CD4-positive, alpha-beta memory T cell (primary cell): ENCODE measurements at regions of chr9 and their contacts with region 1.

Region 1: DNA sequence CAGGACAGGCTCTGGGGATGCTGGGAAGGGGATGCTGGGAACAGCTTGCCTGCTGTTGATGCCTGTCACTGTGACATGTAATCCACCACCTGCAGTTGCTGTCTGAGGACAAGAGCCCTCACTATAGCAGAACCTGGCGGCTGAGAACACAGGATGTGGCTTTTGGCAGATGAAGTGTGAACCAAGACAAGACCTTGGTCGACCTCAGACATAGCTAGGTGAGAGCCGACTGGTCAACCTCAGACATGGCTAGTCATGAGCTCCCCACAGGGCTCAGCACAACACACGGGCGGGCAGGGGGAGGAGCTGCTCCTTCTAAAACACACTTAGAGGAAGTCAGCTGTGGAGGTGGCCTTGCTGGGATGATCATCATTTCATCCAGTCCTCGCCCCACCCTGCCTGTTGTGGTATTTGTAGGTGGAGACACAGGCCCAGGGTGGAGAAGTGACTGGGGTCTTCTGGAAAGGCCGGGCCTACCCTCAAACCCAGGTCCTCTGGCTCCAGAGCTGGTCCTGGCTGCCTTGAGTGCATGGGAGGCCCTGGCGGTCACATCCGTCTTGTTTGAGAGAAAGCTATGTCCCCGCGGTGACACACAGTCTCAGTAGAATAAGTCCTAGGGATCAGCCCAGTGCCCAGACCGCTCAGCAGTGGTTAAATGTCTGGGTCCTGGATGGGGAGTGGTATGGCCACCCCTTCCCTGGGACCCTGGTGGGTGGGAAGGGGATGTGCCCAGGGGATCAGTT is 6.1 kb downstream of the SUSD3 start:
- DNase-seq: peak; percentile 90 to 96 (median 92)
- H3K4me3 ChIP-seq: peak overlapping the region in 1 of 2 donors; percentile 47
- H3K4me3 Mint-ChIP-seq: peak overlapping the region; percentile 87 to 95 (median 91)
- H3K27ac ChIP-seq: peak overlapping the region; percentile 72
- H3K27ac Mint-ChIP-seq: peak overlapping the region; percentile 96 to 100 (median 99)
- H3K4me1 ChIP-seq: peaks cover 98% of the 10 kb centered on the region
- H3K4me1 Mint-ChIP-seq: peaks cover 68 to 97% (median 82%) of the 10 kb centered on the region in 4 donors
- H3K27me3 ChIP-seq: no peaks in the 10 kb centered on the region
- H3K27me3 Mint-ChIP-seq: no peaks in the 10 kb centered on the region

Region 2: GRCh38 chr9:92369075-92369474 is 695.5 kb before region 1 on chr9:
- CTCF ChIA-PET with region 1: no interaction called
- POLR2A ChIA-PET with region 1: no interaction called
- intact Hi-C with region 1: no loop called
- DNase-seq: no peak
- H3K4me3 ChIP-seq: no peak overlapping the region
- H3K4me3 Mint-ChIP-seq: no peak overlapping the region
- H3K27ac ChIP-seq: no peak overlapping the region
- H3K27ac Mint-ChIP-seq: no peak overlapping the region
- H3K4me1 ChIP-seq: no peaks in the 10 kb centered on the region
- H3K4me1 Mint-ChIP-seq: no peaks in the 10 kb centered on the region
- H3K27me3 ChIP-seq: no peaks in the 10 kb centered on the region
- H3K27me3 Mint-ChIP-seq: no peaks in the 10 kb centered on the region

Region 3: GRCh38 chr9:92895812-92896436 is 168.6 kb before region 1 on chr9:
- CTCF ChIA-PET with region 1: no interaction called
- POLR2A ChIA-PET with region 1: no interaction called
- intact Hi-C with region 1: no loop called
- DNase-seq: no peak
- H3K4me3 ChIP-seq: no peak overlapping the region
- H3K4me3 Mint-ChIP-seq: no peak overlapping the region
- H3K27ac ChIP-seq: no peak overlapping the region
- H3K27ac Mint-ChIP-seq: peak overlapping the region in 1 of 7 donors; percentile 8
- H3K4me1 ChIP-seq: no peaks in the 10 kb centered on the region
- H3K4me1 Mint-ChIP-seq: peaks cover 1 to 7% (median 4%) of the 10 kb centered on the region in 4 donors
- H3K27me3 ChIP-seq: no peaks in the 10 kb centered on the region
- H3K27me3 Mint-ChIP-seq: no peaks in the 10 kb centered on the region

Region 4: DNA sequence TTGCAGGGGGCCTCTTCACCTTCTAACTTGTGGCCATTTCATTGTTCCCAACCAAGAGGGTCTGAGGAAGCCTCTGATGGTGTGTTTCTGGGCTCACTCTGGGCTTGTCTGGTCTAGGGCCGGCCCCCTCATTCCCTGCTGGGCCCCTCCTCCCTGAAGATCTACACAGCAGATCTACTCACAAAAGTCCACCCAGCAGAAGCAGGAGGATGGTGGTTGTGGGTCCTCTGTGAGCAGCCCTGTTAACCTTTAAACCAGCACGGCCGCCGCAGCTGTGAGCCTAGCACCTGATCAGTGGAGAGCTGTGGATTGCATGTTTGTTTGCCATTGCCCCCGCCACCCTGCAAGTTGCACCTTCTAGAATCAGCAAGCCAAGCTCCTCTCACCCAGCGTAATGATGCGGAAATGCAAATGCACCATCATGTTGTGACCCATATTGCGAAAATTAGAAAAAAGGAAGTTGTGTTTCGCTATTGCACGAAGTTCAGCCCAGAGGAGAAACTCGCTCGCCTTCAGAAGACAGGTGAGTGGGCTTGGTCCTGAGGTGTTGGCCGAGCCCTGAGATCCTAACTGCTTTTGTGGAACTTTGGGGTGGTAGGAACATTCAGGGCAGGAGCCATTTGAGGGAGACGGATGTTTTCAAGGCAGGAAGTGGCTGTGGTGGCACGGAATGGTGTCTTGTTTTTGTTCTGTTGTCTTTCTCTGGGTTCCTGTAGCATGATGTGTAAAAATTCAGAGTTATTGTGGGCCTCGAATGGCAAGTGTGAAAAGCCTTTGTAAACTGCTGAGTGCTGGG is 100.5 kb before region 1 on chr9:
- CTCF ChIA-PET with region 1: interaction called, 3 read pairs
- POLR2A ChIA-PET with region 1: interaction called, 50 read pairs
- intact Hi-C with region 1: loop called (anchors 1 kb)
- DNase-seq: peak; percentile 87 to 92 (median 90)
- H3K4me3 ChIP-seq: peak overlapping the region; percentile 86 to 97
- H3K4me3 Mint-ChIP-seq: peak overlapping the region; percentile 93 to 99 (median 94)
- H3K27ac ChIP-seq: peak overlapping the region; percentile 84
- H3K27ac Mint-ChIP-seq: peak overlapping the region; percentile 96 to 100 (median 98)
- H3K4me1 ChIP-seq: peaks cover 81% of the 10 kb centered on the region
- H3K4me1 Mint-ChIP-seq: peaks cover 30 to 90% (median 57%) of the 10 kb centered on the region in 4 donors
- H3K27me3 ChIP-seq: no peaks in the 10 kb centered on the region
- H3K27me3 Mint-ChIP-seq: no peaks in the 10 kb centered on the region

Region 5: DNA sequence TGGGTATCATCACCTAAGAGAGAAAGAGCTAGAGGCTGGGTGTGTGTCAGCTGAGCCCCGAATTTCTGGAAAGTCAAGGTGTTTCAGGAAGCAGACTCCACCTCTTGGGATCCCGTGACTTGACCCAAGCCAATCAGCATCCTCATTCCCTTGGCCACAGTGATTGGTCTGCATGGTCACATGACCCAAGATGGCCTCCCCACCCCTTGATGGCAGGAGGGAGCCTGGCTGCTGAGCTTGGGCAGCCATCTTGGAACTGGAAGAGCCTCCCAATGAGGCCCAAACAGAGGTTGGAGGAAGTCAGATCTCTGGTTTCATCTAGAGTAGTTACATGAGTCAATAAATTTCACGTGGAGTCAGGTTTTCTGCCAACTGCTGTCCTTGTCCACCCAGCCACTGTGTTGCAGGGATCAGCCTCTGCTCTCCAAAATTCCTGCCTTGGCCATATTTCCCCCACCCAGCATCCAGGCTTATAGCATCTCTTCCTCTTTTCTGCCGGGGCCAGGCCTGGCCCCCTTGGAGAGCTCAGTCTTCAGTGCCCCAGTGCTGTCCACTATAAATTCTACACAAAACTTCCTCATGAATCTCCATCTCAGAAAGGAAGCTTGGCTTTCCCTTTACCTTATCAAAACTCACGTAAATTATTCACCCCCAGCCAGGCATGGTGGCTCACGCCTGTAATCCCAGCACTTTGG is 23.3 kb before region 1 on chr9:
- CTCF ChIA-PET with region 1: interaction called, 6 read pairs
- POLR2A ChIA-PET with region 1: interaction called, 654 read pairs
- intact Hi-C with region 1: loop called (anchors 1 kb)
- DNase-seq: peak in 1 of 5 donors; percentile 15
- H3K4me3 ChIP-seq: no peak overlapping the region
- H3K4me3 Mint-ChIP-seq: peak overlapping the region in 3 of 8 donors; percentile 8 to 31 (median 24)
- H3K27ac ChIP-seq: no peak overlapping the region
- H3K27ac Mint-ChIP-seq: peak overlapping the region; percentile 41 to 78 (median 74)
- H3K4me1 ChIP-seq: peaks cover 51% of the 10 kb centered on the region
- H3K4me1 Mint-ChIP-seq: peaks cover 27 to 64% (median 44%) of the 10 kb centered on the region in 4 donors
- H3K27me3 ChIP-seq: no peaks in the 10 kb centered on the region
- H3K27me3 Mint-ChIP-seq: no peaks in the 10 kb centered on the region

Region 6: GRCh38 chr9:93077811-93078210 is 13.2 kb after region 1 on chr9:
- CTCF ChIA-PET with region 1: interaction called, 5 read pairs
- POLR2A ChIA-PET with region 1: interaction called, 28 read pairs
- intact Hi-C with region 1: no loop called
- DNase-seq: no peak
- H3K4me3 ChIP-seq: no peak overlapping the region
- H3K4me3 Mint-ChIP-seq: peak overlapping the region in 1 of 8 donors; percentile 16
- H3K27ac ChIP-seq: no peak overlapping the region
- H3K27ac Mint-ChIP-seq: peak overlapping the region in 3 of 7 donors; percentile 55 to 67 (median 66)
- H3K4me1 ChIP-seq: peaks cover 27% of the 10 kb centered on the region
- H3K4me1 Mint-ChIP-seq: peaks cover 18 to 68% (median 31%) of the 10 kb centered on the region in 4 donors
- H3K27me3 ChIP-seq: no peaks in the 10 kb centered on the region
- H3K27me3 Mint-ChIP-seq: no peaks in the 10 kb centered on the region

Region 7: DNA sequence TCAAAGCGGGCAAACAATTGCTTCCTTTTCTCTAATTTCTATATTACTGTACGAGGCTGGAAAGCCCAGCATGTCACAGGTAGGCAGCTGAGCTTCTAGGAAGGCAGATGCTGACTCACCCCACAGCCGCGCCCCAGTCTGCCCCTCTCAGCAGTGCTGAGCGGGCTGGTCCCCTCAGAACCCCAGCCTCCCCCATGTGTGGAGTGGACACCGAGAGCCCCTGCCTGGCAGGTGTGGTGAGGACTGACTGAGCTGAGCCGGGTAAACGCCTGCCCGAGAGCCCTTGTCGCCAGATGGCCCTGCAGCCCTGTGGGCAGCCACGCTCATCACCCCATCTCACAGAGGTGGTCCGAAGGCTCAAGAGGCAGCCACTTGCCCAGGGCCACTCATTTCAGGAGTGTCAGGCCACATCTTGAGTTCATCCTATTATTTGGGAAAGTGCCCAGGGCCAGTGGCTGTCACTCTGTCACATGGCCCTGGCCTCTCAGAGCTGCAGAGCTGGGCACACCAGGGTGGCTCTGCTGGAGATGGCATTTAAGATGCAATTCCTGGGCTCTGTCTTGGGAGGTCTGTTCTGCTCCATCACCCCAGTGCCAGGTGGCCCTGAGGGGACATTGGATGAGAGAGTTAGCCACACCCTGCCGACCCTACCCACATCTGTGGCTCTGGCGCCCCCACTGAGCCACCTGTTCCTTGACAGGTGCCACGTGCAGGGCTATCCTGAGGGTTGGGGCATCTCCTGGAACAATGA is 43.9 kb after region 1 on chr9:
- CTCF ChIA-PET with region 1: interaction called, 10 read pairs
- POLR2A ChIA-PET with region 1: interaction called, 9 read pairs
- intact Hi-C with region 1: no loop called
- DNase-seq: peak in 1 of 5 donors; percentile 44
- H3K4me3 ChIP-seq: no peak overlapping the region
- H3K4me3 Mint-ChIP-seq: peak overlapping the region in 2 of 8 donors; percentile 22 to 63
- H3K27ac ChIP-seq: peak overlapping the region; percentile 6
- H3K27ac Mint-ChIP-seq: peak overlapping the region in 4 of 7 donors; percentile 12 to 84 (median 70)
- H3K4me1 ChIP-seq: peaks cover 52% of the 10 kb centered on the region
- H3K4me1 Mint-ChIP-seq: peaks cover 26 to 60% (median 46%) of the 10 kb centered on the region in 4 donors
- H3K27me3 ChIP-seq: no peaks in the 10 kb centered on the region
- H3K27me3 Mint-ChIP-seq: no peaks in the 10 kb centered on the region